ENCODE measurements at regions of chr6 and their contacts with region 1.

Region 1: DNA sequence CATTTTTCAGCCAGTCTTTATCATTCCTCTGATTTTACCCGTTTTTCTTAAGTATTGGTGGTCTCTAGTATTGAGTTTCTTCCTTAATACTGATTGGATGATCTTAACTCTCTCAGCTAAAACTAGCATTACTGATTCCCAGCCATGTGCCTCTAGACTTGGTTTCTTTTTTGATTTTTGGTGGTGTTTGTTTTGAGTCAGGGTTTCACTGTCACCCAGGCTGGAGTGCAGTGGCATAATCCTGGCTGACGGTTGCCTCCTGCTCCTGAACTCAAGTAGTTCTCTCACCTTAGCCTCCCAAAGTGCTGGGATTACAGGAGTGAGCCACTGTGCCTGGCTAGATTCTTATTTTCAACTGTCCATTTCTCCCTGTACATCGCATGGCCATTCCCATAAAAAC is 24.9 kb downstream of the DPPA5 start:
- DNase-seq: no peak
- H3K4me3 Mint-ChIP-seq: no peak overlapping the region
- H3K27ac Mint-ChIP-seq: no peak overlapping the region
- H3K4me1 Mint-ChIP-seq: peaks cover 14% of the 10 kb centered on the region
- H3K27me3 Mint-ChIP-seq: peaks cover 27% of the 10 kb centered on the region

Region 2: DNA sequence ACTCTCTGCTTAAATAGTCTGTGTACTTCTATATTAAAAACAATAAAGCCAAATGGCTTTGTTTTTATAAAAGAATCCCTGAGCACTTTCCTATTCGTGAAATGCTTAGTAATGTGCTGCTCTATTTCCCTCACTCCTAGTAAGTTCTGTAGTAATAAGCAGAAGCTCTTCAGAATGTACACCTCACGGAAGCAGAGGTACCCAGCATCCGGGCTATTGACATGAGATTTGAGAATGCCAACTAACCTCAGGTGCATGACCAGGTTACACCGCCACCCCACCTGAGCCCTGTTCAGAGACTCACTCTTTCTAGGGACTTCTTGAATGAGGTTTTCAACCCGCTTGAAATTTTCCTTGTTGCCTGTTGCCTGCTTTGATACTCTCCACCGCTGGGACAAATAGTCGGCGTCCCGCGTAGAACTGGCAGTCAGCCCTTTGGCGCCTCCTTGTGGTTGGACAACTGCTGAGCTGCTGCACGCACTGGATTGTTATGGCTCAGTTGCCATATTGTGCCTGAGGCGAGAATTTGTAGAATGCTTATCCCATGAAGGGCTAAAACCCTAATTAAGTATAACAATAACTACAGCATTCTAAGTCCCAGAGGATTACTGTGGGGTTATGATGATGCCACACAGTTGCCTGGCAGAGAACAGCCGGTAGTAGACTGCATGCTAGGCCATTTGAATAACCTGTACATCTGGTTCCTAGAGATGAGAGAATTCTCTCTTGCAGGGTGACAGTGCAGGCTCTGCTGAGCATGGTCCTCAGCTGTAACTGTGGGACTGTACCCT is 199.4 kb before region 1 on chr6:
- CTCF ChIA-PET with region 1: interaction called, 22 read pairs
- POLR2A ChIA-PET with region 1: no interaction called
- DNase-seq: peak; percentile 81
- H3K4me3 Mint-ChIP-seq: peak overlapping the region; percentile 0
- H3K27ac Mint-ChIP-seq: no peak overlapping the region
- H3K4me1 Mint-ChIP-seq: peaks cover 4% of the 10 kb centered on the region
- H3K27me3 Mint-ChIP-seq: peaks cover 2% of the 10 kb centered on the region

Region 3: GRCh38 chr6:73285674-73286283 is 43.4 kb before region 1 on chr6:
- CTCF ChIA-PET with region 1: interaction called, 48 read pairs
- POLR2A ChIA-PET with region 1: no interaction called
- DNase-seq: no peak
- H3K4me3 Mint-ChIP-seq: no peak overlapping the region
- H3K27ac Mint-ChIP-seq: no peak overlapping the region
- H3K4me1 Mint-ChIP-seq: peaks cover 17% of the 10 kb centered on the region
- H3K27me3 Mint-ChIP-seq: no peaks in the 10 kb centered on the region

Region 4: DNA sequence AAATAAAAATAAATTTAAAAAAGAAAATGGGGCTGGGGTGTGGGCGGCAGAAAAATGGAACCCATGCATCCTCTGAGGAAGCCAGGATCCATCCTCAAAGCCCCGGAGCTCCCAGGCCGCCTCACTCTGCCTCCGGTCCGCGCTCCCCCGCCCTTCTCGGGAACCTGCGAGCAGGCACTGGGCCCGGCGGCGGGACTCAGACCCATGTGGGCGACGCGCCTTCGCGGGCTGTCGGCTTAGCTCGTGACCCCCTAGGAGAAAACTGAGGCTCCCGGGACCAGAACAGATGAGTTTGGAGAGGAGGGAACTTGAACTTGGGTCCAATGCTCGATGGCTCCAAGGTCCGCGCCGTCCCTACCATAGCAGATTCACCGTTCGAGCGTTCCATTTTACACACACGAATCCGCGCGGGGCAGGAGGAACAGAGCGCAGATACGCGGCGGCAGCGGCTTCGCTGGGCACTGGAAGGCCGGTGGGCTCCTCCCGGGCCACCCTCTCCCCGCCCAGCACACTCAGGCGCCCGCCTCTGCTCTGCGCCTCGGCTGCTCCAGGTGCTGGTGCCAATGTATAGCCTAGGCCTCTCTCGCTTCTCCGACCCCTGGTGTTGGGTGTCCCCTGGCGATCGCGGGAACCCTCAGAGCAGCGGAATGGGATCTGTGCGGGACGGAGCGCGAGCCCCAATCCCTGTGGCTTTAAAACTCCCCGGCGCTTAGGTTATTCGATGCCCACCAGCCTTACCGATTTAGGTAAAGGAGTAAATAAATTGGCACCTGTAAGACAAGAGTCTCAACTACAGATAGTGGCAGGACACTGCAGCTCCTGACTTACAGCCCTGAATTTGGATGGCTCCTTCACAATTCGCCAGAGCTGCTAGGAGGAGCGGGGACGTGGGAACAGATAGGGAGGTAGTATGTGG is 14.4 kb before region 1 on chr6:
- CTCF ChIA-PET with region 1: interaction called, 21 read pairs
- POLR2A ChIA-PET with region 1: interaction called, 4 read pairs
- DNase-seq: no peak
- H3K4me3 Mint-ChIP-seq: no peak overlapping the region
- H3K27ac Mint-ChIP-seq: no peak overlapping the region
- H3K4me1 Mint-ChIP-seq: peaks cover 17% of the 10 kb centered on the region
- H3K27me3 Mint-ChIP-seq: peaks cover 63% of the 10 kb centered on the region

Region 5: DNA sequence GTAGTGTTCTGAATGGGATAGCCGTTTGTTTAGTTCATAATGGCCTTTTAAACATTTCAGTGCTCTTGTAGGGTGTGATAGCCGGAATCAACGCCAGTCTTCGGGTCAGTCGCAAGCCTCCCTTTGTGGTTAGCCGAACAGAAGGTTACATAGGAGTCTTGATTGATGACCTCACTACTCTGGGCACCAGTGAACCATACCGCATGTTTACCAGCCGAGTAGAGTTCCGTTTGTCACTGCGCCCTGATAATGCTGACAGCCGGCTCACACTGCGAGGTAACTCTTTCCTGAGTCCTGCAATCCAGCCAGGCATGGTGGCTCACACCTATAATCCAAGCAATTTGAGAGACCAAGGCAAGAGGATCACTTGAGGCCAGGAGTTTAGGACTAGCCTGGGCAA is 152.8 kb after region 1 on chr6:
- CTCF ChIA-PET with region 1: no interaction called
- POLR2A ChIA-PET with region 1: no interaction called
- DNase-seq: no peak
- H3K4me3 Mint-ChIP-seq: no peak overlapping the region
- H3K27ac Mint-ChIP-seq: no peak overlapping the region
- H3K4me1 Mint-ChIP-seq: peaks cover 6% of the 10 kb centered on the region
- H3K27me3 Mint-ChIP-seq: no peaks in the 10 kb centered on the region